Calu3 (cell line): ENCODE measurements at regions of chr1 and their contacts with region 1.

Region 1: DNA sequence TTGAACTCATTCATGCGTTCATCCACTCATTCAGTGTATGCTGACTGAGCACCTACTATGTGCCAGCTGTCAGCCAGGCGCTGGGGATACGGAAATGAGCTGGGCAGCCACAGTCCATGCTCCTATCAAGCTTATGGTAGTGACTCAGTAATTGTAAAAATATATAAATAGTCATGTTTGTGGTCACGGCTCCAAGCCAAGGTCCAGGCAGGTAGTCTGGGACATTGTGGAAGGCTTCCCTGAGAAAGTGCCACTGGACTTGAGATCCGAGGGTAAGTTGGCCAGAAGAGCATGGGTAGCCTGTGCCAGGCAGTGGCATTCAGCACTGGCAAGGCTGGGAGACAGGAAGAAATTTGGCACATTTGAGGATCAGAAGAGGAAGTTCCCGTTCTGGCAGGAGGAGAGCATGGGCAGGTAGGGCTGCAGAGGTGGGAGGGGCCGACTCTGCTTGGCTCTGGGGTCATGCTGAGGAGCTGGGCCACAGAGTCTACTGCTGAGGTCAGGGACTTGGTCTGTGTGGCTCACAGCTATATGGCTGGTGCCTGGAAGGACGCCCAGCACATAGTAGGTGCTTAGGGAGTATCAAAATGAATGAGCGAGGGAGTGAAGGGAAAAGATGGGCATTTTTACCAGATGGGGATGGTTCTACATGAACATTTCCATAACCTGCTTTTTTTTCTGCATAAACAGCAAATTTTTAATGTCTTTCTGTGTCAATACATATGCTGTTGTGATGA is 6.9 kb downstream of the PTPRF start:
- DNase-seq: peak; percentile 55
- H3K4me3 Mint-ChIP-seq: peak overlapping the region; percentile 4
- H3K27ac Mint-ChIP-seq: peak overlapping the region; percentile 8
- H3K4me1 Mint-ChIP-seq: peaks cover 53% of the 10 kb centered on the region
- H3K27me3 Mint-ChIP-seq: no peaks in the 10 kb centered on the region
- CTCF ChIP-seq: no peak

Region 2: DNA sequence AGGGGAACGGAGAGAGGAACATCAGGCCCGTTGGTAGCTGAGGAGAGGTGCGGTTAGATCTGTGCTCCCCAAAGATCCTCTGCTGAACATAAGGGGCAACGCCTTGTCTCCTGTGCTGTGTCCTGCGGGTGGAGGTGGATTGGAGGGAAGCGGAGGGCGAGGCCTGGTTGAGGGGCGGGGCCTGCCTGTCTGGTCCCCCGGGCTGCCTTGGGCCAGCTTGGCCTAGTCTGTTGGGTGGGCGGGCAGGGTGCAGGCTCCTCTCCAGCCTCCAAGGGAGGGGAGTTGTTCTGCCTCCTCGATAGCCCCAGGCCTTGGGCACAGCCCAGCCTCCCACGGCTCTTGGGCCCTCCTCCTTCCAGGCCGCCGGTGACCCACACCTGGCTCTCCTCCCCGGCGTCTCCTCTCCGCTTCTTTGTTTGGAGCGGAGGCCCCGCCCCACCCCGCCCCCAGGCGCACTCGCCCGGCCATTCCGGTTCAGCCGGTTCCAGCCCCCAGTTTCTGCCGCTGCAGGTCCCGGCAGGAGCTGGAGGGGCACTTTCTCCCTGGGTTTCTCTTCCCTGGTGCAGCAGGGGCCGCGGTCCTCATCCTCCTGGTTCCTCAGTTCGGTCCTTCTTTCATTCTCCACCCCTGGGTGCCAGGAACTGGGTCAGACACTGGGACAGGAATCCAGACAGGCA is 12.5 kb after region 1 on chr1:
- CTCF ChIA-PET with region 1: interaction called, 18 read pairs
- intact Hi-C with region 1: loop called (anchors 2 kb)
- DNase-seq: peak; percentile 90
- H3K4me3 Mint-ChIP-seq: peak overlapping the region; percentile 58
- H3K27ac Mint-ChIP-seq: peak overlapping the region; percentile 83
- H3K4me1 Mint-ChIP-seq: peaks cover 75% of the 10 kb centered on the region
- H3K27me3 Mint-ChIP-seq: no peaks in the 10 kb centered on the region
- CTCF ChIP-seq: no peak

Region 3: DNA sequence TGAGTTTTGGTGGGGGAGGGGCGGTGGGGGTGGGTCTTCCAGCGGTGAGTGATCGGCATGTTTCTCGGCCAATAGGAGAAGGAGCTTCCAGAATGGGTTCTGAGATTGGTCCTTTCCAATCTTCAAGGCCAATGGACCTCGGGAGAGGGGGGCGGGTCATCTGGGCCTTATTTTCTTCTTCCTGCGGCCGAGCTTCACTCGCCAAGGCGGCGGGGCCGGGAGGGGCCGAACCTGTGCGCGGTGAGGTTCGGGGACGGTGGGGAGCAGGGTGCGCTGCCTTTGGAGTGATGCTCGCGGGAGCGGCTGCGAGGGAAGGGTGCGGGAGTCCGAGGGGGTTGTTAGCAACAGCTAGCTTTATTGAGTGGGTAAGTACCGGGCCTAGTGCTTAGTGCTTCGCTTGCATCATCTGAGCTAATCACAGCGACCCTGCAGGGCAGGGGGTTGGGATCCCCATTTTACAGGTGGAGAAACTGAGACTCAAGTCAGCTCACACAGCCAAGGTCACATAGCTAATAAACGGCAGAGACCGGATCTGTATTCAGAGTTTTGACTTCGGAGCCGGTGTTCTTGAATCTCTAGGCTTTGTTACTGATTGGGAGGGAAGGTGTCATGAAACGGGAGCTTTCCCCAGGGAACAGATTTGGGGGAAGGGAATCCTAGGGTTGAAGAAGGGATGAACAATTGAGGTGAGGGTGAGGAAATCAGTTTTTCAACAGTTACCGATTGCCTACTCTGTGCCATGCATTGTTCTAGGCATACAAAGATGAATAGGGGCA is 112.9 kb after region 1 on chr1:
- CTCF ChIA-PET with region 1: interaction called, 4 read pairs
- intact Hi-C with region 1: loop called (anchors 2 kb)
- DNase-seq: peak; percentile 96
- H3K4me3 Mint-ChIP-seq: peak overlapping the region; percentile 92
- H3K27ac Mint-ChIP-seq: peak overlapping the region; percentile 96
- H3K4me1 Mint-ChIP-seq: peaks cover 28% of the 10 kb centered on the region
- H3K27me3 Mint-ChIP-seq: no peaks in the 10 kb centered on the region
- CTCF ChIP-seq: no peak

Region 4: DNA sequence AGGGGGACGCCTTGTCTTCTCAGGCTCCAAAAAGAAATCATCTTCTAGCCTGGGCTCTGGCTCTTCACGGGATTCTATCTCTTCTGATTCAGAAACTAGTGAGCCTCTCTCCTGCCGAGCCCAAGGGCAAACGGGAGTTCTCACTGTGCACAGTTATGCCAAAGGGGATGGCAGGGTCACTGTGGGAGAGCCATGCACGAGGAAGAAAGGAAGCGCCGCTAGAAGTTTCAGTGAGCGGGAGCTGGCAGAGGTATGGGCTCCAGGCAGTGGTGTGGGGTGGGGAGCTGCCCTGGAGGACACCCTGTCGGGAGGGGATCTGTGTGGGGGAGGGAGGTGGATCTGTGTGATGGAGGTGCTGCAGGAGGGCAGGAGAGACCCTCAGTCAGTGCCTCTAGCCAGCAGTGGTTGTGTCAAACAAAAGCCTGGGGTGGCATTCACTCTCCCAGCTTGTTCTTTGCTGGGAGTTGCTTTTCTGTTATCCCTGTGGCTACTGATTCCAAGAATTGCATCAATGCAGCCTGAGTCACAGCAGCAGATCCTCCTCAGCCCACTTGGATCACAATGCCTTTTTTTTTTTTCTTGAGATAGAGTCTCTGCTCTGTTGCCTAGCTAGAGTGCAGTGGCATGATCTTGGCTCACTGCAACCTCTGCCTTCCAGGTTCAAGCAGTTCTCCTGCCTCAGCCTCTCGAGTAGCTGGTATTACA is 134.2 kb after region 1 on chr1:
- CTCF ChIA-PET with region 1: no interaction called
- intact Hi-C with region 1: no loop called
- DNase-seq: no peak
- H3K4me3 Mint-ChIP-seq: no peak overlapping the region
- H3K27ac Mint-ChIP-seq: no peak overlapping the region
- H3K4me1 Mint-ChIP-seq: no peaks in the 10 kb centered on the region
- H3K27me3 Mint-ChIP-seq: no peaks in the 10 kb centered on the region
- CTCF ChIP-seq: no peak

Region 5: DNA sequence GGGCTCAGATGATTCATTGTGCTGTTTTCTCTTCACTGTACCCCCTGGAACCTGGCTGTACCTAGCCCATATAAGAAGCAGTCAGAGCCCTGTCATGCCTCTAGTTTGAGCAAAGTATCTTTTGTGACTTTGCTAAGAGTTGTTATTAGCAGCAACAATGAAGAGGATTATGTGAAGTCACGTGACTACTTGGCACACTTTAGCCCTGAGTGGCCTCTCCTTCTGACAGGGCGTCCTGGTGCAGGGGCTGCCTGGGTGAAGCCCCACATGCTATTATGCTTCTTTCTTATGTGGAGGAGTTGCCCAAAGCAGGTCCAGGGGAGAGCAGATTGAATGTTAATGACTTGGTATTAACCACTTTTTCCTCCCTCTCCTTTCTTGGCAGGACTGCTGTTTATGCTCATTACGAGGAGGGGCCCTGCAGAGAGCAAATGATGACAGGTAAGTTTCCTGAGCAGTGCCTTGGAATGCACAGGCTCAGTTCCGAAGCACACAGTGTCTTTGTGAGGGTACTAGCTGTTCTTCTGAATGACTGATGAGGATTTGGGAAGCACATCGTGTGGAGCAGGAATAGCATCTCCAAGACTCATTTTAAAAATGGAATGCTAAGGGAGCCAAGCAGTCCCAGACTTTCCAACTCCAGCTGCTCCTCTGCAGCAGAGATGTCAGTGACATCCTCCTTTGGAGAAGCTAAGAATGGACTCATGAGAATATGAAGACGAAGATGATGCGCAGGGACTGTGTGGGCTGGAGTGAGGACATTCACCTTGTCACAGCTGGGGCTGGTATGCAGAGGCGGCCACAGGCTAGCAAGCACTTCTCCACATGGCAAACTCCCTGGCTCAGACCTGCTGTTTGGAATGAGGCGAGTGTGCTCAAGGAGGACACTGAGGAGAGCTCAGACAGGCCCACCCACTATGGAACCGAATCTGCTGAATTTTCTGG is 154.6 kb after region 1 on chr1:
- CTCF ChIA-PET with region 1: no interaction called
- intact Hi-C with region 1: no loop called
- DNase-seq: no peak
- H3K4me3 Mint-ChIP-seq: no peak overlapping the region
- H3K27ac Mint-ChIP-seq: no peak overlapping the region
- H3K4me1 Mint-ChIP-seq: no peaks in the 10 kb centered on the region
- H3K27me3 Mint-ChIP-seq: no peaks in the 10 kb centered on the region
- CTCF ChIP-seq: no peak